AG04450 (cell line): ENCODE measurements at regions of chr19 and their contacts with region 1.

Region 1: DNA sequence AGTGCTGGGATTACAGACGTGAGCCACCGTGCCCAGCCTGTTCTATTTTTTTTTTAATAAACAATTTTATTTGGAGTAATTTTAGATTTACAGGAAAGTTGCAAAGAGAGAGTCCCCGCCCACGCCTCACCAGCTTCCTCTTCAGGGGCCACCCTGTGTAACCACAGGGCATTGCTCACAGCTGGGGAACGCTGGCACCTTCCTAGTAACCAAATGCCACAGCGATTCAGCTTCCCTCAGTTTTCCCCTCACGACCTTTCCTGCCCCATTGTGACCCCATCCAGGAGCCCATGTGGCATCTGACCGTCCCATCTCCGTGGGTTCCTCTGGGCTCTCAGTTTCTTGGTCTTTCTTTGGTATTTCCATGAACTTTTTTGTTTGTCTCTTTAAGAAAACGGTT is 83.9 kb downstream of the GNG7 start:
- DNase-seq: no peak
- H3K4me3 ChIP-seq: no peak overlapping the region
- H3K27ac ChIP-seq: no peak overlapping the region
- H3K27me3 ChIP-seq: no peaks in the 10 kb centered on the region
- CTCF ChIP-seq: no peak

Region 2: DNA sequence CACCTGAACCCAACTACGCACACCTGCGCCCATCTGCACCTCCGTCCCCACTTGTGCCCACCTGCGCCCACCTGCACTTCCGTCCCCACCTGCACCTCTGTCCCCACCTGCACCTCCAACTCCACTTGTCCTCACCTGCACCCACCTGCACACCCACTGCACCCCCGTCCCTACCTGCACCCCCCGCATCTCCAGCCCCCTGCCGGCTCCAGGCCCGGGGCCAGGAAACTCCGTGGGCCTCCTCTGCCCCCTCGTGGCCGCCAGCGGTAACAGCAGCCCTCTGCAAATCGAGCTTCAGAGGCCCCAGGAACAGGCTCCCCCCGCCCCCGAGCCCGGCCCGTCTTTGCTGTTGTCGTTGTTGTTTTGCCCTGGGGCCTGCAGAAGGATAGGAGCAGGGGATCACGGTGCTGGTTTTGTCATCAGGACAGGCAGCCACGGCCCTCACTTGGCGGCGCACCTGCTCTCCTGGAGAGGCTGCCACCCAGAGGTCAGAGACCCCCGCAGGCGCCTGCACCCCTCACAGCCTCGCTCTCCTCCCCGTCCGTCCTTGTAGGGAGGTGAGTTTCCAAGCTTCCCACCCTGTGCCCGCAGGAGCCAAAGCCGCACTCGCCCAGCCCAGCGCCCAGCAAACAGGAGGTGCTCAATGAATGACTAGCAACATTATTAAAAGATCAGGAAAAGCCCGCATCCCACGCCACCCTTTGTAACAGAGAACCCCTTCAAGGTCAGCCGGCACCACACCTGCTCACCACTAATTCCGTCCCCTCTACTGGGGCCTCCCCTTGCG is 18.5 kb after region 1 on chr19:
- CTCF ChIA-PET with region 1: interaction called, 11 read pairs
- POLR2A ChIA-PET with region 1: no interaction called
- DNase-seq: no peak
- H3K4me3 ChIP-seq: no peak overlapping the region
- H3K27ac ChIP-seq: no peak overlapping the region
- H3K27me3 ChIP-seq: peaks cover 14% of the 10 kb centered on the region
- CTCF ChIP-seq: peak; percentile 85

Region 3: GRCh38 chr19:2750808-2751443 is 132.3 kb after region 1 on chr19:
- CTCF ChIA-PET with region 1: no interaction called
- POLR2A ChIA-PET with region 1: no interaction called
- DNase-seq: no peak
- H3K4me3 ChIP-seq: no peak overlapping the region
- H3K27ac ChIP-seq: no peak overlapping the region
- H3K27me3 ChIP-seq: no peaks in the 10 kb centered on the region
- CTCF ChIP-seq: no peak